ENCODE measurements at regions of chr9 and their contacts with region 1.

Region 1: DNA sequence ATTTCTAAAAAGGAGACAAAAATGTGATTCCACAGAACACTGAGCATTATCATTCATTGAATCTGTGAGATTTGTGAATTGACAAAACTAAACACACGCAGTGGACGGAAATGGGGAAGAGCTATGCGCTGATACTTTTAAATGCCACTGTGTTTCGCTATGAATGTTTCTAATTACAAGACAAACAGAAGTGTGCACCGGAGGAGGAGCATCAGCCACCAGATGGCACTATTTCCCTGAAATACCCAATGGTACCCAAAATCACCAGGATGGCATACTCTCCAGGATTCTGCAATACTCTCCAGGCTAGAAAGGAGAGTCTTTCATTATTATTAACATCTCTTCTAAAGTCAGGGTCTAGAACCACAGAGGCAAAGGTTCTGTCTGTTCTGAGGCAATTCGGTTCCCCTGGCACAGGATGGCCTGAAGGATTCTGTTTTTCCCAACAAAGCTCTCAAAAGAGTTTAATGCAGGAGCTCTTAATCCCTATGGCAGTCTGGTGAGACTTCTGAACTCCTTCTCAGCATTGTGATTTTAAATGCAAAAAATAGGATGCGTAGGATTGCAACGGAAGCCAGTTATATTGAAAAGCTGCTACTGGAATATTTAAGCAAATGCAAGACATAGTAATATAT is 13.8 kb upstream of the PUM3 start:
- DNase-seq: peak; percentile 33 to 67 (median 64)
- ATAC-seq: peak; percentile 77 to 81
- H3K4me3 ChIP-seq: no peak overlapping the region
- H3K27ac ChIP-seq: no peak overlapping the region
- H3K4me1 ChIP-seq: no peaks in the 10 kb centered on the region
- H3K27me3 ChIP-seq: no peaks in the 10 kb centered on the region

Region 2: GRCh38 chr9:2919347-2919746 is 61.7 kb after region 1 on chr9:
- intact Hi-C with region 1: no loop called
- DNase-seq: no peak
- ATAC-seq: no peak
- H3K4me3 ChIP-seq: no peak overlapping the region
- H3K27ac ChIP-seq: no peak overlapping the region
- H3K4me1 ChIP-seq: no peaks in the 10 kb centered on the region
- H3K27me3 ChIP-seq: no peaks in the 10 kb centered on the region

Region 3: GRCh38 chr9:3001311-3001710 is 143.6 kb after region 1 on chr9:
- intact Hi-C with region 1: no loop called
- DNase-seq: no peak
- ATAC-seq: no peak
- H3K4me3 ChIP-seq: no peak overlapping the region
- H3K27ac ChIP-seq: no peak overlapping the region
- H3K4me1 ChIP-seq: peaks cover 2% of the 10 kb centered on the region
- H3K27me3 ChIP-seq: no peaks in the 10 kb centered on the region

Region 4: GRCh38 chr9:3181049-3181953 is 323.6 kb after region 1 on chr9:
- intact Hi-C with region 1: loop called in 1 of 4 experiments (anchors 5 kb)
- DNase-seq: peak in 2 of 3 donors; percentile 48 to 57
- ATAC-seq: peak; percentile 36 to 46
- H3K4me3 ChIP-seq: no peak overlapping the region
- H3K27ac ChIP-seq: no peak overlapping the region
- H3K4me1 ChIP-seq: no peaks in the 10 kb centered on the region
- H3K27me3 ChIP-seq: no peaks in the 10 kb centered on the region

Region 5: DNA sequence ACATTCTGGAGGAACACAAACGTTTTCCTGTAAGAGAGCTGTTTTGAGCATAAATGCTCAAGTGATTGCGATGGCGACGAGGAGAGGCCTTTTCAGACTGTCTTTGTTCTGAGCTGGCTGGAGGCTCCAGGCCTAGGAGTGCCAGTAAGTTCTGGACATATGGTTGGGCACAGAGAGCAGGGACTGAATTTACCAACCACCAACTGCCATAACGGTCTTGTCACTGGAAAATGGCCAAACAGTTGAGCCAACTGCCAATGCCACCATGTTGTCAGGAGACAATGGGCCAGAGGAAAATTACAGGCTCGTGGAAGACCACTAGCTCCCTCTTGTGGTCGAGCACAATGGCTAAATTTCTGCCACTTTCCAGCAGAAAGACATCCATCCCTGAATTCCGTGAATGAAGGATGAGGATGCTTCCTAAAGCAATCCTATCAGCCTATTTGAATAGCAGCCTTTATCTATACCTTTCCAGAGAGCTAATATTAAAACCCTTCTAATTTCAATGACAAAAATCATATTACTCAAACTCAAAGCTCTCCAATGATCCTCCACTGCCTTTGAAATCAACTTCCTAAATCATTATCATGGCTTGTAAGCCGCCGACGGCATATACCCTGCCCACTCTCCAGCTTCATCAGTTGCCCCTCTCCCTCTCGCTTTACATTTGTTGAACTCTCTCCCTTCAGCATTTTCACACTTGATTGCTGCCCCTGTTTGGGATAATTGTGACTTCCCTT is 1509.1 kb after region 1 on chr9:
- intact Hi-C with region 1: loop called in 1 of 4 experiments (anchors 10 kb)
- DNase-seq: no peak
- ATAC-seq: no peak
- H3K4me3 ChIP-seq: no peak overlapping the region
- H3K27ac ChIP-seq: no peak overlapping the region
- H3K4me1 ChIP-seq: no peaks in the 10 kb centered on the region
- H3K27me3 ChIP-seq: no peaks in the 10 kb centered on the region